Activated T-helper 2 cell treated with anti-CD3 and anti-CD28 coated beads, Interferon-gamma antibody, Interleukin-2, Interleukin-4, amounts not matched to agents 10 μg/mL and 5 μg/mL and 100 μg/mL, durations not matched to agents 14 hours and 24 hours and 36 hours (primary cell): ENCODE measurements at regions of chr1 and their contacts with region 1.

Region 1: DNA sequence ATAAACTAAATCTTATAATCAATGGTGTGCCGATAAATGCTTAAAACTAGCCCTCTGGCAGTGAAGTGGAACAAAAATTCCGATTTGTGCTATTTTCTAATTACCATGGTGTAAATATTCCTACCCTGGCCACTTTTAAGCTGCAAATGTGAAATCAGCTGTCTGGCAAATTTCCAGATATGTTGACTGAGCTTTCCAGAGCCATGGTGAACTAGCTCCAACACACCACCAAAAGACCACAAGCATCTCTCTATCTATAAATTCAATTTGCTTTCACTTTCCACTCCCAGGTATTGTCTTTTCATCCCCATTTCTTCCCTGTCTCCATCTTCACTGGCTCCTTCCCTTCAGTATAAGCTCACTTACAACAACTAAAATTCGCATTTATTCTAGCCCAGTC is 152.3 kb upstream of the RGS18 start:
- DNase-seq: no peak
- H3K4me3 Mint-ChIP-seq: no peak overlapping the region
- H3K27ac Mint-ChIP-seq: no peak overlapping the region
- H3K4me1 Mint-ChIP-seq: no peaks in the 10 kb centered on the region
- H3K27me3 Mint-ChIP-seq: no peaks in the 10 kb centered on the region

Region 2: GRCh38 chr1:191648939-191649338 is 357.0 kb before region 1 on chr1:
- intact Hi-C with region 1: loop called (anchors 5 kb)
- DNase-seq: no peak
- H3K4me3 Mint-ChIP-seq: no peak overlapping the region
- H3K27ac Mint-ChIP-seq: no peak overlapping the region
- H3K4me1 Mint-ChIP-seq: no peaks in the 10 kb centered on the region
- H3K27me3 Mint-ChIP-seq: no peaks in the 10 kb centered on the region

Region 3: DNA sequence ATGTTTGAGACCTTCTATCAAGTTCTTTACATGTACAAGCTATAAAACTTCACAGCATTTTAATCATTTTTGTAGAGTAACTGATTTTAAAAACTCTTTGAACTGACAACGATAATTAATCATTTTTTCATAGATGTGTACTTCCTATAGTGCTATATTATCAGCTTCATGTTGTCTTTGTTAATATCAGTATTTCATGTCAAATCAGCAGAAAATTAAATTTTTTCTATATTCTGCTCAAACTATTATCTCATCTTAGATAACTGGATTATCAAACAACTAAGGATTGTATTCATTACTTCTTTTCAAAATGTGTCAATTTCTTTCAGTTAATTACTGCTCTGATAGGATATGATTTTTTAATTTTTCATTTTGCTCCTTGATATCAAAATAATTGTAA is 62.3 kb before region 1 on chr1:
- intact Hi-C with region 1: no loop called
- DNase-seq: no peak
- H3K4me3 Mint-ChIP-seq: no peak overlapping the region
- H3K27ac Mint-ChIP-seq: no peak overlapping the region
- H3K4me1 Mint-ChIP-seq: no peaks in the 10 kb centered on the region
- H3K27me3 Mint-ChIP-seq: no peaks in the 10 kb centered on the region